ENCODE measurements at regions of chr12 and their contacts with region 1.

Region 1: DNA sequence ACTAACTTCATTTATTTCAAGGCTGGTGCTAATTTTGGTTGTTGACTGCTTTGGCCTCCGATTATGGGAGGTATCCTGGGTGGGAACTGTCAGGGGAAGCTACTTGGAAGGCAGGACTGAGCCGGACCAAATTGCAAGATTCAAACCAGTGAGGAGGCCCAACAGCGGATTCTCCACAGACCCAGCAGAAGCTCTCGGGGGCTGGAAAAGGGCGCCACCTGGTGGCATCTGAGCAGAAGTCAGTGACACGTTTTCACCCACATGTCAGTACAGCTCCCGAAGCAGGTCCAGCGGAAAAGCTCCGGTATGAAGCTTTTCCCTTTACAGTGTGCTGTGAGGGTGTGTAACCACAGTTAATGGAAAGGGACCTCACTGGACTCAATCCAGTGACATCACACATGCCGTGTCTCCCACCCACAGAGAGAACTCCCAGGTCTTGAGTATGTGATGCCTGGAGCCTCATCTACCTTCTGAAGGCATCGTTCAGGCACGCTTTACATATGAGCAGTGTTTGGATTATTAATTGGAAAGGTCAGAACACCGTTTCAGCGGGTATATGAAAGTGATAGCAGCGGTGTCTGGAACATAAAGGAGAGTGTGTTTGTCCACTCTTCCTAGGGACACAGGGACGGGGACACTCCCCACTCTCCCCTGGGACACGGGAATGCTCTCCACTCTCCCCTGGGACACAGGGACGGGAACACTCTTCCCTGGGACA is 3.6 kb upstream of the P2RX2 start:
- DNase-seq: peak; percentile 60
- H3K4me3 ChIP-seq: no peak overlapping the region
- H3K27ac ChIP-seq: no peak overlapping the region
- H3K27me3 ChIP-seq: peaks cover 54% of the 10 kb centered on the region
- CTCF ChIP-seq: peak; percentile 90

Region 2: GRCh38 chr12:132218915-132219314 is 396.1 kb before region 1 on chr12:
- CTCF ChIA-PET with region 1: no interaction called
- POLR2A ChIA-PET with region 1: interaction called, 15 read pairs
- DNase-seq: no peak
- H3K4me3 ChIP-seq: no peak overlapping the region
- H3K27ac ChIP-seq: no peak overlapping the region
- H3K27me3 ChIP-seq: peaks cover 6% of the 10 kb centered on the region
- CTCF ChIP-seq: peak; percentile 19; the same call in 1 of the 2 replicates

Region 3: GRCh38 chr12:132414634-132415326 is 200.2 kb before region 1 on chr12:
- CTCF ChIA-PET with region 1: interaction called, 59 read pairs
- POLR2A ChIA-PET with region 1: no interaction called
- DNase-seq: peak; percentile 34
- H3K4me3 ChIP-seq: no peak overlapping the region
- H3K27ac ChIP-seq: no peak overlapping the region
- H3K27me3 ChIP-seq: peaks cover 8% of the 10 kb centered on the region
- CTCF ChIP-seq: peak; percentile 91

Region 4: DNA sequence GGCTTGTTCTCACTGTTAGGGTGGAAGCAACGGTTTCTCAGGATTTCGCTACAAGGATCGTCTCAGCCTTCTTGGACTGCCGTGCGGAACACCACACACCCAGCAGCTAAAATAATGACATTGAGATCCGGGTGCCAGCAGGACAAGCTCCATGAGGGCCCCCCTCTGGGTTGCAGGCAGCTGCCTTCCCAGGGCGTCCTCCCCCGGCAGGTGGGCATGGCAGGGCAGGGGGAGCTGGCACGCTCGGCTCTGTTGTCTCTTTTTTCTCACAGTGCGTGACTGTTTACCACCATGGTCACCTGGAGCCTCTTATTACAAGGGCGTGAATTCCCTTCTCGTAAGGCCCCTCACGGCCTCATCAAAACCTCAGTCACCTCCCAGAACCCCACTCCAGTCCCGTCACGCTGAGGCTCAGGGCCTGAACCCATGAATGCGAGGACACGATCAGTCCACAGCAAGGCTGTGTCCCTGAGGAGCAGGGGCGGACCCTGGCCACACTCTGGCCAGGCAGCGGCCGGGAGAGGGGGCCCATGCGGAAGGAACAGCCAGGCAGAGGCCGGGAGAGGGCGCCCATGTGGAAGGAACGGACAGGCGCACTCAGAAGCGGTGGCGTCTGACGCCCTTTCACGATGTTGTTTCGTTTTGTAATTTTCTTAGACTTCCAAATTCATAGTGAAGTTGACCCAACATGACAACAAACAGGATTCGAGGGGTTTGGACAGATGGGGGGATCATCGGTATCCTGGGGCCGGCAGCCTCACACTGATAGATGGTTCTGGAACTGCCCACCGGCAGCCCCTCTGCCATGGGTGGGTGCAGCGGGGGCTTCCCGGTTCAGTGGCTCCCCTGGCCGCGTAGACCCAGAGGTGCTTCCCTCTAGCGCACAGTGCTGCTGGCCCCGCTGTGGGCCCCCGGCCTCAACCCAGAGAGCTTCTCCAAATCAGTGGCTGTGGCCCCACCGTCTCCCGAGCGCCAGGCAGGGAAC is 14.7 kb before region 1 on chr12:
- CTCF ChIA-PET with region 1: interaction called, 17 read pairs
- POLR2A ChIA-PET with region 1: interaction called, 3 read pairs
- DNase-seq: no peak
- H3K4me3 ChIP-seq: peak overlapping the region; percentile 49
- H3K27ac ChIP-seq: no peak overlapping the region
- H3K27me3 ChIP-seq: peaks cover 35% of the 10 kb centered on the region
- CTCF ChIP-seq: peak; percentile 83

Region 5: GRCh38 chr12:132624910-132625630 is 10.1 kb after region 1 on chr12:
- CTCF ChIA-PET with region 1: interaction called, 12 read pairs
- POLR2A ChIA-PET with region 1: interaction called, 4 read pairs
- DNase-seq: no peak
- H3K4me3 ChIP-seq: no peak overlapping the region
- H3K27ac ChIP-seq: no peak overlapping the region
- H3K27me3 ChIP-seq: peaks cover 3% of the 10 kb centered on the region
- CTCF ChIP-seq: no peak

Region 6: DNA sequence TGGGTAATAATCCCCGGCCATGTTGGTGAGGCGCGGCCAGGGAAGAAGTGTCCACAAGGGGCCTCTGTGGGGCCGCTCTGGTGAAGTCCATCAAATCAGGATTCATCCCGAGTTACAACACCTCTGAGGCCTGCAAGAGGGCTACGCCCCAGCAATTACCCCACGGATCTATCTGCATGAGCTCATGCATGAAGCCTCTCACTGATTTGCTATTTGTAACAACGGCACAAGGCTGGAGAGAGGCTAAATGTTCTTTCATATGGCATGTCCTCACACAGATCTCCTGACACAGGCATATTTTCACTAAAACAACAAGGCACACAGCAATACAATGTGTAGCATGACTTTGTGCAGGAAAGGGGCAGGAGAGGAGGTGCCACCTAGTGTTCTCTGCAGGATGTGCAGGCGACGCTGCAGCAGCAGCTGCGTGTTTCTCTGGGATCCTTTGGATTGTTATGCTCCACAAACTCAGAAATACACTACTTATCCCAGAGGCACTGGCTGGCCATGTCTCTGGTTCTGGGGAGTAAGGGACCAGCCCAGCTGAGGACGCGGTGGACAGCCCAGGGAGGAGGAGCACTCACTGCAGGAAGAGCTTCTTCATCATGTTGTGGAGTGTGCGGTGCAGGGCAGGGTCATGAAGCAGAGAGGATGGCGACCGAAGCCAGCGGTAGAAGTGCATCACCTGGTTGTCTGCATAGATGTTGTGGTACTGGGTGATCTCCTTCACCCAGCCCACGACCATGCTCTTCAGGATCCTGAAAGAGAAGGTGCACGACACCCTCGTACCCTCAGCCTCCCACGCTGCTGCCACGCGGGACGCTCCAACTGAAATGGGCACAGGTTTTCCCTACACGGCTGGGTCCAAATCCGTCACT is 23.8 kb after region 1 on chr12:
- CTCF ChIA-PET with region 1: interaction called, 15 read pairs
- POLR2A ChIA-PET with region 1: no interaction called
- DNase-seq: peak; percentile 30
- H3K4me3 ChIP-seq: no peak overlapping the region
- H3K27ac ChIP-seq: no peak overlapping the region
- H3K27me3 ChIP-seq: no peaks in the 10 kb centered on the region
- CTCF ChIP-seq: peak; percentile 91